ENCODE measurements at regions of chr21 and their contacts with region 1.

Region 1: DNA sequence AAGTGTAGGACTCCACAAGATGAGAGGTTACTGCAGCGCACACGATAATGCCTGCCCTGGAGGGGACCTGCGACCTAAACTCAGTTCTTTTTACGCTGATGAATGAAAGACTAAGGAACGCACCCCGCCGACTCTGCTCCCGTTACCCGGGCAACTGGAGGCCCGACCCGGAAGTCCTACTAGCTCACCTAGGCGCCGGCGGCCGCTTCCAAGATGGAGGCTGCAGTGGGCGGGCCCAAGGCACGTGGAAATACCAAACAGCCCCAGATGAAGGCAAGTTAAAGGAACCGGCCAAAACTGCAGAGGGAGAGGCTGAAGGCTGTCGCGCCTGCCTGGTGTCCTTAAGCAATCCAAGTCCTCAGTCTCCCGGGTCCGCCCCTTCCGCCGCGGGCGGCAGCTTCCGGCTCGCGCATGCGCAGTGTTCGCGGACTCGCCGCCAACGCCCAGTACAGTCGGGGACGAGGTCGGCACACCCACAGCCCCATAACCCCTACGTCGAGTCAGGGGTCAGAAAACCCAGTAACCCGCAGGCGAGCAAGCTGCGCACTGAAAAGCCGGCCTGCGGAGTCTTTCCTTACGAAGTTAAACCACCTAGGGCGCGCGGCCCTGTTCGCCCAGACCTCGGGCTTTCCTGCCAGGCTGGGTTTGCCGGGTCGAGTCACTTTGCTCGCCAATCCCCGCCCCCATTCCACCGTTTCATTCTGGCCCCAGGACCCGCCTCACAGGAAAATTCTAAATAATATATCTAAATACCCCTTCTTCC is at the start of gene SETD4:
- DNase-seq: peak; percentile 96
- ATAC-seq: peak; percentile 89
- H3K4me3 ChIP-seq: peak within 1 kb of the TSS; percentile 80 to 95 (median 95)
- H3K4me3 Mint-ChIP-seq: peak within 1 kb of the TSS; percentile 92
- H3K27ac ChIP-seq: peak within 1 kb of the TSS; percentile 73 to 90
- H3K27ac Mint-ChIP-seq: peak within 1 kb of the TSS; percentile 97
- H3K4me1 ChIP-seq: peaks cover 3 to 15% of the 10 kb centered on the region in 2 donors
- H3K4me1 Mint-ChIP-seq: peaks cover 22% of the 10 kb centered on the region
- H3K27me3 ChIP-seq: no peaks in the 10 kb centered on the region
- H3K27me3 Mint-ChIP-seq: no peaks in the 10 kb centered on the region
- CTCF ChIP-seq: no peak
- total RNA-seq, gene SETD4: 48.5 and 51.5 TPM in 2 replicates

Region 2: GRCh38 chr21:36079010-36079649 is 18.8 kb after region 1 on chr21:
- CTCF ChIA-PET with region 1: interaction called, 4 read pairs
- POLR2A ChIA-PET with region 1: interaction called, 9 read pairs
- intact Hi-C with region 1: loop called (anchors 2 kb)
- DNase-seq: peak; percentile 61
- ATAC-seq: peak; percentile 79
- H3K4me3 ChIP-seq: peak overlapping the region in 1 of 5 experiments; percentile 20
- H3K4me3 Mint-ChIP-seq: peak overlapping the region; percentile 64
- H3K27ac ChIP-seq: peak overlapping the region; percentile 35 to 51
- H3K27ac Mint-ChIP-seq: peak overlapping the region; percentile 90
- H3K4me1 ChIP-seq: peaks cover 26 to 29% of the 10 kb centered on the region in 2 donors
- H3K4me1 Mint-ChIP-seq: peaks cover 37% of the 10 kb centered on the region
- H3K27me3 ChIP-seq: no peaks in the 10 kb centered on the region
- H3K27me3 Mint-ChIP-seq: no peaks in the 10 kb centered on the region
- CTCF ChIP-seq: no peak

Region 3: GRCh38 chr21:36104317-36105300 is 44.3 kb after region 1 on chr21:
- CTCF ChIA-PET with region 1: interaction called, 5 read pairs
- POLR2A ChIA-PET with region 1: interaction called, 6 read pairs
- intact Hi-C with region 1: loop called (anchors 2 kb)
- DNase-seq: peak; percentile 72
- ATAC-seq: peak; percentile 71
- H3K4me3 ChIP-seq: peak overlapping the region in 2 of 5 experiments; percentile 13 to 16
- H3K4me3 Mint-ChIP-seq: peak overlapping the region; percentile 59
- H3K27ac ChIP-seq: no peak overlapping the region
- H3K27ac Mint-ChIP-seq: no peak overlapping the region
- H3K4me1 ChIP-seq: peaks cover 7 to 9% of the 10 kb centered on the region in 2 donors
- H3K4me1 Mint-ChIP-seq: peaks cover 8% of the 10 kb centered on the region
- H3K27me3 ChIP-seq: peaks cover 0 to 14% (median 10%) of the 10 kb centered on the region in 4 experiments
- H3K27me3 Mint-ChIP-seq: peaks cover 26% of the 10 kb centered on the region
- CTCF ChIP-seq: peak; percentile 72

Region 4: DNA sequence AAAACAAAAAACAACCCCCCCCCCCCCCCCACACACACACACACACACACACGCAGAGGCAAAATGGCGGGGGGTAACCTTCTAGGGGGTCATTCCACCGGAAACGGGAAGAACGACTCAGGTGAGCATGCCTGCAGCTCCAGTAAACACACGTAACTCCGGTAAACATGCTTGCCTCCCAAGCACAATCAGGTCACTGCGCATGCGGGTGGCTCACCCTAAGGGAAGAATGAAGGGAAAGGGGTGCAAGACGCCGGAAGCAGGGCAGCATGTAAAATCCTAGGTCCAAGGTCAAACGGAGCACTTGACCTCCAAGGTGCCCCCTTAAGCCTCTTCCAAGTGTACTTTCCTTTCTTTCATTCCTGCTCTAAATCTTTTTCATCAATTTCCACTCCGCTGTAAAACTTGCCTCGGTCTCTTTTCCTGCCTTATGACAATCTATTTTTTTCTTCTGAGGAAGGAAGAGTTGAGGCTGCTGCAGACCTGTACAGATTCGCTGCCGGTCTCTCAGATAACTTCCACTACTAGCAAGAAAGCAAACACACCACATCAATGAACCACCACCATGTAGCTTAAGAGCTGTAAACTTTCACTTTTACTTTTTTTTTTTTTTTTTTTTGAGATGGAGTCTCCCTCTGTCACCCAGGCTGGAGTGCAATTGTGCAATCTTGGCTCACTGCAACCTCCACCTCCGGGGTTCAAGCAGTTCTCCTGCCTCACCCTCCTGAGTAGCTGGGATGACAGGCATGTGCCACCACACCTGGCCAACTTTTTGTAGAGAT is 53.5 kb after region 1 on chr21:
- CTCF ChIA-PET with region 1: interaction called, 15 read pairs
- POLR2A ChIA-PET with region 1: interaction called, 9 read pairs
- intact Hi-C with region 1: loop called (anchors 1 kb)
- DNase-seq: no peak
- ATAC-seq: no peak
- H3K4me3 ChIP-seq: peak overlapping the region in 2 of 5 experiments; percentile 8 to 16
- H3K4me3 Mint-ChIP-seq: peak overlapping the region; percentile 79
- H3K27ac ChIP-seq: peak overlapping the region in 1 of 2 donors; percentile 20
- H3K27ac Mint-ChIP-seq: peak overlapping the region; percentile 87
- H3K4me1 ChIP-seq: peaks cover 15 to 29% of the 10 kb centered on the region in 2 donors
- H3K4me1 Mint-ChIP-seq: peaks cover 24% of the 10 kb centered on the region
- H3K27me3 ChIP-seq: no peaks in the 10 kb centered on the region
- H3K27me3 Mint-ChIP-seq: no peaks in the 10 kb centered on the region
- CTCF ChIP-seq: no peak

Region 5: DNA sequence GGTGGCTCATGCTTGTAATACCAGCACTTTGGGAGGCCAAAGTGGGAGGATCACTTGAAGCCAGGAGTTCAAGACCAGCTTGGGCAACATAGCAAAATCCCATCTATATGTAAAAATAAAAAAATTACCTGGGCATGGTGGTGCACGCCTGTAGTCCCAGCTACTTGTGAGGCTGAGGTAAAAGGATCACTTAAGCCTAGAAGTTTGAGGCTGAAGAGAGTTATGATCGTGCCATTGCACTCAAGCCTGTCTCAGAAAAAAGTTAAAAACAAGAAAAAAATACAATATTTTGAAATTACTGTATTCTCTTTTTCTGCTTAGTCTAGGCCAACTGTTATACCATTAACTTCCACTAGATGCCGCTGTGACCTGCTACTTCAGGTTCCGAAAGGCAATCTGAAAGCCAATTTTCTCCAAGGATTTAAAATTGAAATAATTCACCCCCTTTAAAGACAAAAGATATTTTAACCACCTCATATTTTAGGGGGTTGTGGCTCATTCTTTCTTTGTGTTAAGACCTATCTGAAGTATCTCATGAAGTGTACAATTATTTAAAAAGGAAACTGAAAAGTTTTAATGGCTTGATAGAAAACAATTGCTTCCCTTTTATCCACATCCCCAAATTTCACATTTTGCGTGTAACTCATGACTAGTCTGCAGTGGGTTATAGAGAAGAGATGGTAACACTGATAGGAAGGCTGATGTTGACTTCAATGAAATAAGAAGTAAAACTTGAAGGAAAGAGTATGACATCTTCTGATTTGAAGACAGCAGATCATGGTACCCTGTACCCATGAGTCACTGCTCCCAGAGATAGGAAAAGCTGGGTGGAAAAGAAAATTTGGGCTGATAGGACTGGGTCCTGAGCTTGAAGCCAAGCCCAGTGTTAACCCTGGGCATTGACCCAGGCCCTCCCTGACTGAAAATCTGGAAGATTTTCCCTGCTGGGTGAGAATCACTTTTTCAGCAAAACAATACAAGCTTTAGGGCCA is 444.0 kb after region 1 on chr21:
- CTCF ChIA-PET with region 1: no interaction called
- POLR2A ChIA-PET with region 1: no interaction called
- intact Hi-C with region 1: no loop called
- DNase-seq: peak; percentile 58
- ATAC-seq: no peak
- H3K4me3 ChIP-seq: no peak overlapping the region
- H3K4me3 Mint-ChIP-seq: no peak overlapping the region
- H3K27ac ChIP-seq: no peak overlapping the region
- H3K27ac Mint-ChIP-seq: no peak overlapping the region
- H3K4me1 ChIP-seq: no peaks in the 10 kb centered on the region
- H3K4me1 Mint-ChIP-seq: no peaks in the 10 kb centered on the region
- H3K27me3 ChIP-seq: peaks cover 0 to 5% (median 0%) of the 10 kb centered on the region in 4 experiments
- H3K27me3 Mint-ChIP-seq: peaks cover 4% of the 10 kb centered on the region
- CTCF ChIP-seq: peak; percentile 99

Region 6: DNA sequence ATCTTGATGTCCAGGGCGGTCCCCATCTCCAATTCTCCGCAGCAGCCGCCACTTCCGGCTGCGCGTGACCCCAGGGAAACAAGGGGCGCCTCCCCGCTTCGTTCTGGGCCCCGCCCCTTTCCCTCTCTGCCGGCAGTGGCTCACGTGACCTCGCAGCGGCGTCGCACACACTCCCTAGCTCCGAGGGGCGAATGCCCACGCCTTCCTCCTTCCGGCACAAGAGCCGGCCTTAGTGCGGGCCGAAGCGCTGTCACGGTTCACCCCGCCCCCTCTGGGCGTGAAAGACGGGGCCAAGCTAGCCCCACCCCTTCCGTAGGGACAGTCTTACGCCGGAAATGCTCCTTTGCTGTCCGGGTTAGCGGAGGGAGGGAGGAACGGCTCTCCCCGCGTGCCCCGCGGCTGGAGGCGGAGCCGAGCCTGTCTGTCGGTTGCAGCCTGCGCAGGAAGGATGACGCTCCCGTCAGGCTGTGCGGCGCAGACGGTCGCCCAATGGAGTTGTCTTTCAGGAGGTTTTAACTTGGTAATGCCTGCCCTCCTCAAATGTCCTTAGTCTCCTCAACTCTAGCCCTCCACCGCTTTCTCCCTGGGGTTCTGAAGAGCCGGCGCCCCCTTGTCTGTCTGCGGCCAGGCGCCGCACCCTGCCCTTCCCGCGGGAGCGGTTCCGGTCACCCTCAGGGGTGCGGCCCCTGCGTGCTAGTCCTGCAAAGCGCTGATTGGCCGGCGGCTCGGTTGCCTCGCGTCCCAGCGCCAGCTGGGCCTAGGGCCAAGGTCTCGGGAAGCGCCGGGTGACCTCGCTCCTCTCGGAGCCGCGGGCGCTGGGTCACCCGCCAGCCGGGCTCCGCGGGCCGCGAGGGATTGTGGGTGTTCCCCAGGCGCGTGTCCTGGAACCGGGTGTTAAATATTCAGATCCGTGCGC is 1207.2 kb after region 1 on chr21 and contains the start of gene VPS26C:
- CTCF ChIA-PET with region 1: no interaction called
- POLR2A ChIA-PET with region 1: no interaction called
- intact Hi-C with region 1: loop called (anchors 10 kb)
- DNase-seq: peak; percentile 100
- ATAC-seq: peak; percentile 86
- H3K4me3 ChIP-seq: peak within 1 kb of the TSS; percentile 66 to 99 (median 99)
- H3K4me3 Mint-ChIP-seq: peak within 1 kb of the TSS; percentile 96
- H3K27ac ChIP-seq: peak within 1 kb of the TSS; percentile 99
- H3K27ac Mint-ChIP-seq: peak within 1 kb of the TSS; percentile 99
- H3K4me1 ChIP-seq: peaks cover 14% of the 10 kb centered on the region in 2 donors
- H3K4me1 Mint-ChIP-seq: peaks cover 35% of the 10 kb centered on the region
- H3K27me3 ChIP-seq: peaks cover 0 to 3% (median 0%) of the 10 kb centered on the region in 4 experiments
- H3K27me3 Mint-ChIP-seq: no peaks in the 10 kb centered on the region
- CTCF ChIP-seq: no peak
- total RNA-seq, gene VPS26C: 58.6 and 59.6 TPM in 2 replicates

Measured in B cell (primary cell).